CD4-positive, alpha-beta memory T cell (primary cell): ENCODE measurements at regions of chr9 and their contacts with region 1.

Region 1: GRCh38 chr9:93962561-93963440 is 7.6 kb upstream of the BARX1 start:
- DNase-seq: peak; percentile 75 to 77 (median 75)
- H3K4me3 ChIP-seq: no peak overlapping the region
- H3K4me3 Mint-ChIP-seq: peak overlapping the region in 2 of 8 donors; percentile 6 to 21
- H3K27ac ChIP-seq: no peak overlapping the region
- H3K27ac Mint-ChIP-seq: no peak overlapping the region
- H3K4me1 ChIP-seq: peaks cover 38% of the 10 kb centered on the region
- H3K4me1 Mint-ChIP-seq: peaks cover 12 to 44% (median 26%) of the 10 kb centered on the region in 4 donors
- H3K27me3 ChIP-seq: peaks cover 21% of the 10 kb centered on the region
- H3K27me3 Mint-ChIP-seq: peaks cover 32 to 47% of the 10 kb centered on the region in 2 donors

Region 2: GRCh38 chr9:93682232-93682968 is 280.4 kb before region 1 on chr9:
- CTCF ChIA-PET with region 1: interaction called, 44 read pairs
- POLR2A ChIA-PET with region 1: no interaction called
- intact Hi-C with region 1: no loop called
- DNase-seq: peak in 4 of 5 donors; percentile 28 to 39 (median 32)
- H3K4me3 ChIP-seq: no peak overlapping the region
- H3K4me3 Mint-ChIP-seq: no peak overlapping the region
- H3K27ac ChIP-seq: no peak overlapping the region
- H3K27ac Mint-ChIP-seq: no peak overlapping the region
- H3K4me1 ChIP-seq: no peaks in the 10 kb centered on the region
- H3K4me1 Mint-ChIP-seq: peaks cover 3 to 10% (median 6%) of the 10 kb centered on the region in 4 donors
- H3K27me3 ChIP-seq: no peaks in the 10 kb centered on the region
- H3K27me3 Mint-ChIP-seq: peaks cover 4 to 5% of the 10 kb centered on the region in 2 donors